A673 (cell line): ENCODE measurements at regions of chr2 and their contacts with region 1.

Region 1: GRCh38 chr2:148067801-148068200 is 46.9 kb downstream of the MBD5 start:
- DNase-seq: no peak
- H3K4me3 ChIP-seq: no peak overlapping the region
- H3K27ac ChIP-seq: no peak overlapping the region
- H3K4me1 ChIP-seq: no peaks in the 10 kb centered on the region
- H3K27me3 ChIP-seq: no peaks in the 10 kb centered on the region
- CTCF ChIP-seq: no peak

Region 2: DNA sequence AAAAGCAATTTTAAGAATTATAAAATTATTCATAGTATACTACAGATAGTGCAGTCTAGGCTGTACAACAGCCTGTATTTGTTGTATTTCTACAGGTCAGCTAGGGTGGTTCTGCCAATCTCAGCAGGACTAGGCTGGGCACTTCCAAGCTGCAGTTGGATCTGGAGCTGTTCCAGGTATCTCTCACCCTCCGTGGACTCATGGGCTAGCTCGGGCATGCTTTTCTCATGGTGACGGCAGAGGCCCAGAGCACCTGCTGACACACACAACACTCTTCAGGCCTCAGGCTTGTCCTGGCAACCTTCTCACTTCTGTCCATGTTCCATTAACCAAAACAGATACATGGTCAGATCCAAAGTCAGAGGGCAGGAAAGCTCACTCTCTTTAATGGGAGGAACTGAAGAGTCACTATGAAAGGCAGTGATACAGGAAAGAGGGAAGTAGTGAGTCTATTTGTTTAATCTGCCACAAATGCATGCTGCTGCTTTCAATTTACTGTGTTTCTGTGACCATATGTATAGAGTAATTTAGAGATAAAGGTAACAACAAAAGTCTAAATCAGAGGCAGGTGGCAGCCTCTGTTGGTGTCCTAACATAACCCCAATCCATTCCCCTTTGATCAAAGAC is 685.4 kb before region 1 on chr2:
- CTCF ChIA-PET with region 1: no interaction called
- POLR2A ChIA-PET with region 1: no interaction called
- intact Hi-C with region 1: no loop called
- DNase-seq: no peak
- H3K4me3 ChIP-seq: no peak overlapping the region
- H3K27ac ChIP-seq: no peak overlapping the region
- H3K4me1 ChIP-seq: no peaks in the 10 kb centered on the region
- H3K27me3 ChIP-seq: no peaks in the 10 kb centered on the region
- CTCF ChIP-seq: no peak

Region 3: GRCh38 chr2:148048475-148049221 is 19.2 kb before region 1 on chr2:
- CTCF ChIA-PET with region 1: no interaction called
- POLR2A ChIA-PET with region 1: no interaction called
- intact Hi-C with region 1: no loop called
- DNase-seq: no peak
- H3K4me3 ChIP-seq: no peak overlapping the region
- H3K27ac ChIP-seq: no peak overlapping the region
- H3K4me1 ChIP-seq: no peaks in the 10 kb centered on the region
- H3K27me3 ChIP-seq: no peaks in the 10 kb centered on the region
- CTCF ChIP-seq: no peak

Region 4: DNA sequence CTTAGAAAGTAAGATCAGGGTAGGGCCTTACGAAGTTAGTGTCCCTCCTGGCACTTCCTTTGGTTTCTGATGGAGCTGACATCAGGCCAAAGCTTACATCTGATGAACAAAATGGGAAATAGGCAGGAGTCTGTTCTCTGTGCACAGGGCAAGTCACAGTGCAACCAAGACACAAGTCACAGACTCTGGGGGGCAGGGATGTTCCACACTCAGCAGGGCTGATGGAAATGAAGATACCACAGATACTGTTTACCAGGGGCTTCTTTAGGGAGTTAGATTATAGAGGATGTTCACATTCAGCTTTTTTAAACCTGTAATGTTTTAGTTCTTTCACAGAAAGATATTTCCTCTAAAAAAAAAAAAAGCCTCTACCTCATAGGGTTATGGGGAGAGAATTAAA is 470.6 kb after region 1 on chr2:
- CTCF ChIA-PET with region 1: interaction called, 10 read pairs
- POLR2A ChIA-PET with region 1: no interaction called
- intact Hi-C with region 1: no loop called
- DNase-seq: no peak
- H3K4me3 ChIP-seq: no peak overlapping the region
- H3K27ac ChIP-seq: no peak overlapping the region
- H3K4me1 ChIP-seq: no peaks in the 10 kb centered on the region
- H3K27me3 ChIP-seq: no peaks in the 10 kb centered on the region
- CTCF ChIP-seq: no peak